ENCODE measurements at regions of chr4 and their contacts with region 1.

Region 1: GRCh38 chr4:78569291-78569821 is 17.8 kb downstream of the ANXA3 start:
- DNase-seq: peak; percentile 39 to 94
- H3K4me3 ChIP-seq: 0 out of 2 replicates have a peak overlapping the region, but pooled peaks have one; percentile 25
- H3K27ac ChIP-seq: peak overlapping the region; percentile 79
- H3K4me1 ChIP-seq: peaks cover 62% of the 10 kb centered on the region
- H3K27me3 ChIP-seq: no peaks in the 10 kb centered on the region
- CTCF ChIP-seq: no peak

Region 2: DNA sequence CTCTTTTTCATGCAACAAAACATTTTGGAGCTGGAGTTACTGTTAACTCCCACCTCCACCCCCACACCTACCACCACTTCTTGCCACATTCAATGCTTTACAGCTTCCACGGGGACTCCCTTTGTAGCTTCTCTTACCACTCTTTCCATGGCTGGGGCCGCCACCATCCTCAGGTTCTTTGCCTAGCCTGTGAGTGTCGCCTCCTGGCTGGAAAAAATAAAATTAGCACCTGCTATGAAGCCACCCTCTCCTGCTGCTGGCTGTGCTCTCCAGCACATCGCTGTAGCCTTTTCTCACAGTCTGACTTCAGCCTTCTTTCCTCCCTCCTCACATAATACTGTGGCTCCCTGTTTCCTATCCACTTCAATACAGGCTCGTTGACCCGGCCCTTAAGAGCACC is 397.9 kb before region 1 on chr4:
- CTCF ChIA-PET with region 1: no interaction called
- POLR2A ChIA-PET with region 1: no interaction called
- intact Hi-C with region 1: loop called (anchors 10 kb)
- DNase-seq: no peak
- H3K4me3 ChIP-seq: no peak overlapping the region
- H3K27ac ChIP-seq: no peak overlapping the region
- H3K4me1 ChIP-seq: peaks cover 15% of the 10 kb centered on the region
- H3K27me3 ChIP-seq: no peaks in the 10 kb centered on the region
- CTCF ChIP-seq: no peak

Region 3: GRCh38 chr4:78293821-78294301 is 275.5 kb before region 1 on chr4:
- CTCF ChIA-PET with region 1: no interaction called
- POLR2A ChIA-PET with region 1: interaction called, 3 read pairs
- intact Hi-C with region 1: loop called (anchors 5 kb)
- DNase-seq: peak; percentile 63 to 67
- H3K4me3 ChIP-seq: no peak overlapping the region
- H3K27ac ChIP-seq: peak overlapping the region; percentile 58
- H3K4me1 ChIP-seq: peaks cover 30% of the 10 kb centered on the region
- H3K27me3 ChIP-seq: no peaks in the 10 kb centered on the region
- CTCF ChIP-seq: no peak

Region 4: DNA sequence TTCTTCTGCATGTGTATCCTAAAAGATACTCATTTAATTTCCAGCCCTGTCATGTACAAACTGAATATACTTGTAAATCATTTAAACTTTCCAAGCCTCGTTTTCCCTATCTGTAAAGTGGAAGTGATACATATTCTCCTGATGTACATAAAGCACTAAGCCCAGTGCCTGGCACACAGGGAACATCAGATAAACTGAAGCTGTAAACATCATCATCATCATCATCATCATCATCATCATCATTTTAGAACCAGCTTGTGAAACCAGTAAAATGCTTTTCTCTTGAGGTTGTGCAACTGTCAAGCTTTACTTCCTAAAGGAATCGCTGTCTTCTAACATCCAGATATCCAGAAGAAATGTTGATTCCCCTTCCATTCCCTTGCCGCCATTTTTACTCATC is 101.1 kb before region 1 on chr4:
- CTCF ChIA-PET with region 1: no interaction called
- POLR2A ChIA-PET with region 1: no interaction called
- intact Hi-C with region 1: no loop called
- DNase-seq: no peak
- H3K4me3 ChIP-seq: no peak overlapping the region
- H3K27ac ChIP-seq: no peak overlapping the region
- H3K4me1 ChIP-seq: no peaks in the 10 kb centered on the region
- H3K27me3 ChIP-seq: no peaks in the 10 kb centered on the region
- CTCF ChIP-seq: no peak

Region 5: DNA sequence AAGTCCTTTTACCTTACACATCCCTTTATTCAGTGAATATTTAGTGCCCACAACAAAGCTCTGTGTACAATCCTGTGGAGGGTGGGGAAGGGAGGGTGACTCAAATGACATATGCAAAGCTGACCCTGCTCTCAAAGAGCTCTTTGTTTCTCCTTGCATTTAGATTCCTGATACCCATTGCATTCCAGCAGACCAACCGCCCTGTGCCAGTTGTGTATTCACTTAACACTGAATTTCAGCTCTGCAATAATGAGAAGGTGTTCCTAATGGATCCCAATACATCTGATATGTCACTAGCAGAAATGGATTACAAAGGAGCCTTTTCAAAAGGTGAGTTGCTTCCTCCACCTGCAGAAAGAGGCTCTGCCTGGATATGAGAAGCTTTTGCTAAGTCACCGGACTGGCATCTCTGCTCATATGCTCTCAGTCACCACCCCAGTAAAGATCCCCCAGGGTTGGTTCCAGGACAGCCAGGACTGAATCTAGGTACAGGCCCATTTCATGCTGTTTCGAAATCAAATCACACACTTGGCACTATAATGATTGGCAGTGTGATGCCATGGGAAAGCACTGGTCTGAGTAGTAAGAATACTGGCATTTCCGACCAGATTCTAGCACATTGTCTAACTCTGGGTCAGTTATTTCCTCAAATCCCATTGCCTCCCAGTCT is 34.9 kb before region 1 on chr4:
- CTCF ChIA-PET with region 1: no interaction called
- POLR2A ChIA-PET with region 1: interaction called, 21 read pairs
- intact Hi-C with region 1: loop called (anchors 5 kb)
- DNase-seq: peak; percentile 61 to 91
- H3K4me3 ChIP-seq: no peak overlapping the region
- H3K27ac ChIP-seq: peak overlapping the region; percentile 91
- H3K4me1 ChIP-seq: peaks cover 46% of the 10 kb centered on the region
- H3K27me3 ChIP-seq: no peaks in the 10 kb centered on the region
- CTCF ChIP-seq: no peak

Region 6: DNA sequence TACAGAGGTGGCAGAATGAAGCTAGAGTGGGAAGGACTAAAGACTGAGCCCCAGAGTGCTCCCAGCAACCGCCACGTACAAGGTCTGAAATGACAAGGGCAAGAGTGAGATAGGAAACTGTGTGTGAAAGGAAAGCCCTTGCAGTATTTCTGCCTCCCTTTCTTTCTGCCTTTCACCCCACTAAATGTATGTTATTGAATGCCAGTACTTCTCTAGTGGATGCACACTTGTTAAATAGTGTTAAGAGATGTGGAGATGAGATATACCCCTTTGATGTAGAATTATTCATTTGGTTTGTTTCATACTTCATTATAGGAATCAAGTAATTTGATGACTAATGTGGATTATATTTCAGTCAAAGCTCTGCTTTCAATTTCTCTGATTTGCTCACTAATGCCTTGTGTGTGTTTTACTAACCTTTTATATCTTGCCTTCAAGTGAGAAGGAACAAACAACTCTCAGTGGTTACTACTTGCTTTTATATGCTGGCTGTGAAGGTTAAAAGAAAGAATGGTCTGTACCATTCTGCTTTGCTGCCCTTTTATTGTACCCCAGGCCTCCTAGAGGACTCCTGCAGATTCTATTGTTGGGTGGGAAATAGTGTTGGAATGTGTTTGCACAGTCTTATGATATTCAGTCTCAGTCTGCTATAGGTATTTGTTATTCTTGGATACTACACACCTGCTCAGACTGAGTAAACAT is 25.8 kb before region 1 on chr4:
- CTCF ChIA-PET with region 1: no interaction called
- POLR2A ChIA-PET with region 1: interaction called, 11 read pairs
- intact Hi-C with region 1: no loop called
- DNase-seq: peak in 1 of 2 experiments; percentile 63
- H3K4me3 ChIP-seq: no peak overlapping the region
- H3K27ac ChIP-seq: no peak overlapping the region
- H3K4me1 ChIP-seq: peaks cover 17% of the 10 kb centered on the region
- H3K27me3 ChIP-seq: no peaks in the 10 kb centered on the region
- CTCF ChIP-seq: no peak

Region 7: DNA sequence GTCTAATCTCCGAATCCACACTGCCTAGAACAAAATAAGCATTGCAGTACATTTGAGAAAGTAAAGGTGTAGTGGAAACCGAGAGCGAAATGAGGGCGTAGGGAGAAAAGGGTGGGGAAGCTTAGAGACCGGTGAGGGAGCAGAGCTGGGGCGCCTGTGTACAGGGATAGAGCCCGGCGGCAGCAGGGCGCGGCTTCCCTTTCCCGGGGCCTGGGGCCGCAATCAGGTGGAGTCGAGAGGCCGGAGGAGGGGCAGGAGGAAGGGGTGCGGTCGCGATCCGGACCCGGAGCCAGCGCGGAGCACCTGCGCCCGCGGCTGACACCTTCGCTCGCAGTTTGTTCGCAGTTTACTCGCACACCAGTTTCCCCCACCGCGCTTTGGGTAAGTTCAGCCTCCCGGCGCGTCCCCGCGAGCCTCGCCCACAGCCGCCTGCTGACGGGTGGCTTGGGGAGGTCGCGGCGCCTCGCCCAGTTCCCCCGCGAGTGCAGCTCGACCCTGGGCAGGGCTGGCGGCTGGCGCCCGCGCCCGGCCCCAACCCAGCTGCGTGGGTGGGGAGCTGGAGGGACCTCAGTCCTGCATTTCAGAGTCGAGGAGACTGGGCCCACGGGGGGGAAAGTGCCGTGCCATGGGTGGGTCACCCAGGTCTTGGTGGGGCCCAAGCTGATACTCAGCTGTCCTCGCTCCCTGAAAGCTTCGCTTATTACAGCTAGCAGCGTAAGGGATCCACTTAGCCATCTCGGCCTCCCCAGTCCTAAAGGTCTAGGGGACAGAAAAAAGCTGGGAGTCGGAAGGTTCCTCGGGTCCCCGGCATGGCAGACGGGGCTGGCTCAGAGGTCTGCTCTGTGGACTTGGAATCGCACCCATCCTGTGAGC is 17.6 kb before region 1 on chr4 and contains the start of gene ANXA3:
- CTCF ChIA-PET with region 1: no interaction called
- POLR2A ChIA-PET with region 1: interaction called, 8 read pairs
- intact Hi-C with region 1: loop called (anchors 1 kb)
- DNase-seq: peak; percentile 51 to 72
- H3K4me3 ChIP-seq: peak within 1 kb of the TSS; percentile 88
- H3K27ac ChIP-seq: peak within 1 kb of the TSS; percentile 99
- H3K4me1 ChIP-seq: peaks cover 47% of the 10 kb centered on the region
- H3K27me3 ChIP-seq: no peaks in the 10 kb centered on the region
- CTCF ChIP-seq: no peak
- total RNA-seq, gene ANXA3: 139 and 140 TPM in 2 replicates

Measured in PC-9 (cell line).